OCI-LY7 (cell line): ENCODE measurements at regions of chr13 and their contacts with region 1.

Region 1: GRCh38 chr13:32045982-32046785 is 14.6 kb downstream of the FRY start:
- DNase-seq: peak; percentile 76
- H3K4me3 ChIP-seq: peak overlapping the region; percentile 21
- H3K27ac ChIP-seq: peak overlapping the region; percentile 61
- H3K4me1 ChIP-seq: peaks cover 32% of the 10 kb centered on the region
- CTCF ChIP-seq: no peak

Region 2: DNA sequence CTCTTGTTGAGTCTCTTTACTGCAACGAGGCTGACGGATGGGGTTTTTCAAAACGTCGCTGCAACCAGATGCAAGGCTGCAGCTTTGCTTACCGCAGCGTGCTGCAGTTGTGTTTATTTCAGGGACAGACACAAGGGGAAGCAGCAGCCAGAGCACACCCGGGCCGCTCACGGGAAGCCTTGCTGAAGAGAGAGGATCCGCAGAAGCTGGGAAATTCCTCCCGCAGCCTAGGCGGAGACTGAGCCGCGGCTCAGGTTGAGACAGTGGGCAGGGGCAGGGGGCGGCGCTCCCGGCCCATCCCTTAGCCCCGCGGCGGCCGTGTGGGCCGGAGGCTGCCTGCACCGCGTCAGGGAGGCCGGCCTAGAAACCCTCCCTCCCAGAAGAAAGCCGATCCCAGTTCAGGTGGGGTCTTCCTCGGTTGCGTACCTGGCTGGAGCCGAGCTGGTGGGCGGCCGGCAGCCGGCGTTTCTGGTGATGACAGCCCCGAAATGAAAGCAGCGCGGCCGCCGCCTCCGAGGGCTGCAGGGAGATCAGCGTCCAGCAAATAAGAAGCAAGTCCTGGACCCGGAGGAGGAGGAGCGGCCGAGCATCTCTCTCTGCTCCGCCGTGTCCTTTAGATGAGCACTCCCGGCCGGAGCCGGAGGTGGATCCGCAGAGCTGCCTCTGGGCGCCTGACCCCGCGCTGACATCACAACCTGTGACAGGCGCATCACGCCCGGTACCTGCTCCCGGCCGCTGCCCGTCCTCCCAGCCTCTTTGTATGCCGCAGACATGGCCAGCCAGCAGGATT is 15.0 kb before region 1 on chr13 and contains the start of gene FRY:
- CTCF ChIA-PET with region 1: interaction called, 3 read pairs
- POLR2A ChIA-PET with region 1: interaction called, 16 read pairs
- intact Hi-C with region 1: no loop called
- DNase-seq: peak; percentile 49
- H3K4me3 ChIP-seq: peak within 1 kb of the TSS; percentile 70
- H3K27ac ChIP-seq: no peak within 1 kb of the TSS
- H3K4me1 ChIP-seq: peaks cover 9% of the 10 kb centered on the region
- CTCF ChIP-seq: no peak
- total RNA-seq, gene FRY: 3.0 and 7.1 TPM in 2 replicates

Region 3: GRCh38 chr13:32075170-32075851 is 29.1 kb after region 1 on chr13:
- CTCF ChIA-PET with region 1: no interaction called
- POLR2A ChIA-PET with region 1: no interaction called
- intact Hi-C with region 1: no loop called
- DNase-seq: no peak
- H3K4me3 ChIP-seq: no peak overlapping the region
- H3K27ac ChIP-seq: no peak overlapping the region
- H3K4me1 ChIP-seq: no peaks in the 10 kb centered on the region
- CTCF ChIP-seq: no peak

Region 4: DNA sequence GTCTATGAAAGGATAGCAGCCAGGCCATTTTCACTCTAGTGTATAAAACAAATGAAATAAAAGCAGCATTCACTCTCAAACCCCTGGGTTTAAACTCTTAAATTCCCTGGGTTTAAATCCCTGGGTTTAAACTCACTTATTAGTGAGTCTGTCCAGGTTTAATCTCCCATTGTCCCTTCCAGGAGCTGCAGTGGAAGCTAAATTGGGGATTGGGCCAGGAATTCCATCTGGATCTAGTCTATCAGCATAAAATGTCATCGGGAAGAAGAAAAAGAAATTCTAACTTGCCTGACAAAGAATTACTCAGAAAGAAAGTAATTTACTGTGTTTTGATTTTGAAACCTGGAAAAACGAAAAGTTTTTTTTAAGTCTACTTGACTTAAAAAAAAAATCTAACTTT is 40.2 kb after region 1 on chr13:
- CTCF ChIA-PET with region 1: no interaction called
- POLR2A ChIA-PET with region 1: interaction called, 10 read pairs
- intact Hi-C with region 1: no loop called
- DNase-seq: no peak
- H3K4me3 ChIP-seq: no peak overlapping the region
- H3K27ac ChIP-seq: no peak overlapping the region
- H3K4me1 ChIP-seq: no peaks in the 10 kb centered on the region
- CTCF ChIP-seq: no peak

Region 5: DNA sequence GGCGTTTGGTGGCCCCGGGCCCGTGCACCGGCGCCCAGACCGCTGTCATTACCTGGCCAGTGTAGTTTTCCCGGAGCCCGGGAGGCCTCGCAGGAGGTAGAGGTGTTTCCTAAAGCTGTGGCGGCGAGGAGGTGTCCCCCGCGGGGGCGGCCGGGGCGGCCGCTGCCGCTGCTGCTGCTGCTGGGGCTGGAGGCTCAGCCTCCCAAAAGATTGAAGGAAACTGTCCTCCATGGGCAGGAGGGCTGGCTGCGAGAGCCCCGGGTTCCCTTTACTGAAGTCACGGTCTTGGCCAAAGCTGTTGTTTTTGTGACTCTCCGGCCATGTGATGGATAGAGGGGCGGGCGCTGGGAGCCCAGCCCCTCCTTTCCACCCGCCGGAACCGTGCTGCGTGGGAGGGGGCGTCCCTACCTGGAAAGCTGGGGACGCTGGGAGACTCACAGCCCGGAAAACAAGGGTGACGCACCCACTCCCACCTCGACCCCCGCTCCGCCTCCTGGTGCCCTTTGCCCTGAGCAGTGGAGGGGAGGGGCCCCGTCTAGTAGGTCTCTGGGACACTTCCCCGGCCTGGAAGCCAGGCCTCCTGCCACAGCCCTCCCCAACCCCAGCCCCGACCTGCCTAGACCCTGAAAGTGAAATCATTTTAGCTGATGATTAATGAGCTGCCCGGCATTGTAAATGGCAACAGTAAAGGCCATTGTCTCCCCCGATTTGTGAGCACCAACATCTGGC is 381.8 kb after region 1 on chr13 and contains the start of gene N4BP2L1:
- CTCF ChIA-PET with region 1: no interaction called
- POLR2A ChIA-PET with region 1: no interaction called
- intact Hi-C with region 1: loop called (anchors 10 kb)
- DNase-seq: peak; percentile 66
- H3K4me3 ChIP-seq: peak within 1 kb of the TSS; percentile 96
- H3K27ac ChIP-seq: peak within 1 kb of the TSS; percentile 60
- H3K4me1 ChIP-seq: peaks cover 25% of the 10 kb centered on the region
- CTCF ChIP-seq: no peak
- total RNA-seq, gene N4BP2L1: 12.8 and 14.6 TPM in 2 replicates